Activated CD8-positive, alpha-beta memory T cell treated with anti-CD3 and anti-CD28 coated beads, Interleukin-2, amount 10 ng/mL, durations not matched to agents 7 days and 5 days (primary cell): ENCODE measurements at regions of chr22 and their contacts with region 1.

Region 1: DNA sequence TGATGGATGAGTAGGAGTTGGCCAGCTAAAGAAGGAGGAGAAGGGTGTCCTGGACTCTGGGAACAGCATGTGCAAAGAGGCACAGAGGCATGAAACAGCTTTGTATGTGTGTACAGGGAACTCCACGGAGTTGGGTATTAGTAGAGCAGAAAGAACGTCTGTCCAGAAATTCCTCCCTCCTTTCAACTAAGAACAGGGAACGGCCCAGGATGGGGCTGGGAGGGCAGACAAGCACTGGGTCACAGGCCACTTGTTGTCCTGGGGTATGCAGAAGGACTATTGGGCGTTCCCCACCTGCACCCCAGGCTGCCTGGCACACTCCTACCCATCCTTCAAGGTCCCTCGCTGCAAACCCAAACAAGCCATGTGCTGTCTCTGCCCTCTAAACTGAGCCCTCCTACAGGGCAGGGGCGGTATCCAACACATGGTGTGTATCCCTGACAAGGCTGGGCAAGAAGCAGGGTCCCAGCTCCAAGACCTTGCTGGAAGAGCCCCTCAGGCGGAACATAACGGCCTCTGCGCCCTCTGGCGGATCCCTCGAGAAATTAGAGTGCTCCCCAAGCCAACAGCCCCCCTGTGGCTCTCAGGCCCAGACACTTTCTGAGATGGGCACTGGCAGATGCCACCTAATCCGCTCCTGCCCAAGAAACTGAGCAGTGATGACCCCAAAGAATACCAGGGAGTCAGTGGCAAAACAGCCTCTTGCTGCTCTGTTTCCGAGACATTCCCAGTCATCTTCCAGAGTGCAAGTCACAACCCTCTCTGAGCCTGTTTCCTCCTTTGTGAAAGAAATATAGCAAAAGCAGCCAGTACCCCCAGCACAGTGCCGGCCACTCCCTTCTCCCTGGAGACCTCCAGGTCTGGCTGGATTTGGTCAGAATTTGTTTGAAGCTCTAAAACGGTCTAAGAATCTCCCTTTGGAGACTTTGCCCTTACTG is 1.6 kb upstream of the ELFN2 start:
- DNase-seq: peak; percentile 69
- ATAC-seq: peak; percentile 56
- H3K4me3 Mint-ChIP-seq: no peak overlapping the region
- H3K27ac Mint-ChIP-seq: no peak overlapping the region
- H3K4me1 Mint-ChIP-seq: peaks cover 18% of the 10 kb centered on the region
- H3K27me3 Mint-ChIP-seq: peaks cover 58% of the 10 kb centered on the region

Region 2: DNA sequence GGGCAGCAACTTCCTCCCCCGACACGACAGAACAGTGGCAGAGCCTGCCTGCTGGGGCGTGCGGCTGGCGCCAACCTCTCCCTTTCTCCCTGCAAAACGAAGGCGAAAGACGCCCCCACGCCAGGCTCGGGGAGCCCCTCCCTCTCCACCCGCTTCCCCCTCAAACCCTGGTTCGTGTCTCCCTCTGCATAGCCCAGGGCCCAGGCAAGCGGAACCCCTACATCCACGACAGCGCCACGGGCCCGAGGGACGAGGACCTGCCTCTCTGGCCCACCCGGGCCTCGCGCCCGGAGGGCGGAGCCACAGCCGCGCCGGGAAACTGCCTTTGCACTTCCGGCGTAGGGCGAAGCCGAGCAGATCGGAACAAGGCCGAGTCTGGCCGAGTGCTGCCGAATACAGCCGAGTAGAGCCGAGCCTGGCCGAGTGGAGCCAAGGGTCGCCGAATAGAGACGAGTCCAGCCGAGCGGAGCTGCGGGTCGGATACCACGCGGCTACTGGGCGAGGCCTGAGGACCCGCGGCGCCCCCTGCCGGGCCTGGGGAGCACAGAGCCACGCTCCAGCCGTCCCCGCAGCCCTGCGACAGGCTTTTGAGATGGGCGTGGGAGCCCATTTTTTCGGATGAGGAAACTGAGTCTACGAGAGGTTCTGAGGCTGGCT is 229.7 kb before region 1 on chr22:
- CTCF ChIA-PET with region 1: no interaction called
- DNase-seq: peak; percentile 100
- ATAC-seq: peak; percentile 97
- H3K4me3 Mint-ChIP-seq: peak overlapping the region; percentile 80
- H3K27ac Mint-ChIP-seq: peak overlapping the region; percentile 94
- H3K4me1 Mint-ChIP-seq: peaks cover 33% of the 10 kb centered on the region
- H3K27me3 Mint-ChIP-seq: no peaks in the 10 kb centered on the region

Region 3: DNA sequence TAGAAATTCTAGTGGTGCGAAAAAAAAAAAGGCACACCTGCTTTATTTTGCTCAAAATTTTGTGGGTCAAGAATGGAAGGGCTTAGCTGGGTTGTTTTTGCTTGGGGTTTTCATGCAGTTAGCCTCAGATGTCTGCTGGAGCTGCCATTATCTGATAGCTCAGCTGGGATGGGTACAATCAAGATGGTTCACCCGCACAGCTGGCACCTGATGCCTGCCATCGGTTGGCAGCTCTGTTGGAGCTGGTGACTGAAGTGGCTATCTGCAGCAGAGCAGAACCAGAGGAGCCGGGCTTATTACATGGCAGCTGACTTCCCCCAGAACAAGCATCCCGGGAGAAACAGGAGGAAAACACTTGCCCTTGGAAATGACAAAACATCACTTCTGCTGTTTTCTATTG is 10.4 kb after region 1 on chr22:
- CTCF ChIA-PET with region 1: interaction called, 12 read pairs
- DNase-seq: no peak
- ATAC-seq: no peak
- H3K4me3 Mint-ChIP-seq: no peak overlapping the region
- H3K27ac Mint-ChIP-seq: no peak overlapping the region
- H3K4me1 Mint-ChIP-seq: peaks cover 6% of the 10 kb centered on the region
- H3K27me3 Mint-ChIP-seq: peaks cover 12% of the 10 kb centered on the region

Region 4: GRCh38 chr22:37457093-37457893 is 28.4 kb after region 1 on chr22:
- CTCF ChIA-PET with region 1: interaction called, 12 read pairs
- DNase-seq: peak; percentile 87
- ATAC-seq: peak; percentile 98
- H3K4me3 Mint-ChIP-seq: no peak overlapping the region
- H3K27ac Mint-ChIP-seq: no peak overlapping the region
- H3K4me1 Mint-ChIP-seq: no peaks in the 10 kb centered on the region
- H3K27me3 Mint-ChIP-seq: no peaks in the 10 kb centered on the region